ENCODE measurements at regions of chr11 and their contacts with region 1.

Region 1: GRCh38 chr11:35237860-35238715 is 99.1 kb downstream of the CD44 start:
- DNase-seq: no peak
- ATAC-seq: peak; percentile 23

Region 2: DNA sequence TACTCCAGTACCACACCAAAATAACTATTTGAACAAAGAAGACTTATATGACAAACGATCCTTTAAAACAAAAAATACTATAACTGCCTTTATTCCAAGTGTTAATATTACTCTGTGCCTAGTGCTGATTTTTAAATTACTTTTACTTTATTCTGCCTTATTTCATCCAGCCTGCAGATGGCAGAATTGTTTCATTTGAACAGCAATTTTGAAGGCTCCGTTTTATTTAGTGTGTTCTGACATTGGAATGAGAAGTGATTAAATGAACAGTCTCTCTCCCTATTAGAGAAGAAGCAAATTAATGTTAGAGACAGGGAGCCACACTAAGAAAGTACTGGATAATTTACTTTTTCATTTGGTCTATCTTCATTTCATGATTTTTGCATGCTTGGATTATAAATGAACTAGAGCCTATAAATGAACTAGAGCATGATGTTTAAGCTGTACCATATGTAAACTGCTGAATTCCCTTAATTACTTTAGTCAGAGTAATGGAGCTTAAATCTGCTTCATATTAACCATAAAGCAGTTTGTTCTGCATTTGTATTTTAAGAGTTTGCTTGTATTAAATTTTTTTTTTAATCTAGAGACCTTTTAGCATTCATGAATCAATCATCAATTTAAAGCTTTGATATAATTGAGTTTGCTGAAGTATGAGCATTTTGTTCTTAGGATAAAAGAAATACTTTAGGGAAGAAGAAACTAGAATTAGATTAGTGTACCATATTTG is 311.8 kb before region 1 on chr11:
- intact Hi-C with region 1: loop called (anchors 2 kb)
- DNase-seq: no peak
- ATAC-seq: peak; percentile 52

Region 3: DNA sequence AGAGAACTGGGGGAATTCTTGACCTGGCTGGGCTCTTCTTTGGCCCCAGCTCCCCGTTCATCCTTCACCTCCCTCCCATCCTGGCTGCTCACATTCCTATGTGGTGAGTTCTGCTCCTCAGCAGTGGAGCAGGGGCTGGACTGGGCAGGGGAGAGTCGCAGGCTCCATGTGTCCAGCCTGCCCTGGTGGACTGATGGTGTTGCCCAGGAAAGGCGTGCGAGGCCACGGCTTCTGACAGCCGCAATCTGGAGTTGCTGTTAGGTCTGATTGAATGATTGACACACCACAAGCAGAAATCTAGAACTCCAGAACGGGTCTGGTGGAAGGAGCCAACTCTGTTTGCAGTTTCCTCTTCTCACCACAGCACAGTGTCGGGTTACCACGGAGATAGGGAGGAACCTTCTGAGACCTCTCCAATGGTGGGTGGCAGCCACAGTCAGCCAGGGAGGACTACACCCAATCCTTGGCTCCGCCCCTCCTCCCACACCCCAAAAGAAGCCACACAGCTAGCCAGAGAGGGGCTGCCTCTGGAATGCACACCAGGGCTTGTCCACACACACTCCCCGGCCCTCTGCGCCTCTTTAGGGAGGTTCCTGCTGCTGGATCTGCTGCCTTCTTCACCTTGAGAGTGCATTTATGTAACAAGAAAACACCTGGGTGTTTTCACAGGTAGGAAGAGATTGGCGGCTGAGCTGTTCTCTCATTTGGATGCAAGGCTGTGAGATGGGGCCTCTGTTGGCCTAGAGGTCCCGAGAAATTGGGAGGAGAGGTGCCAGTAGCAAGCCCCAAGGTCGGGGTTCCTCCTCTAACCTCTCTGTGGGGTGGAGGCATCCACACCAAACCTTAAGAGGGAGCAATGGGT is 155.5 kb before region 1 on chr11:
- intact Hi-C with region 1: loop called (anchors 10 kb)
- DNase-seq: peak; percentile 87
- ATAC-seq: peak; percentile 63

Region 4: DNA sequence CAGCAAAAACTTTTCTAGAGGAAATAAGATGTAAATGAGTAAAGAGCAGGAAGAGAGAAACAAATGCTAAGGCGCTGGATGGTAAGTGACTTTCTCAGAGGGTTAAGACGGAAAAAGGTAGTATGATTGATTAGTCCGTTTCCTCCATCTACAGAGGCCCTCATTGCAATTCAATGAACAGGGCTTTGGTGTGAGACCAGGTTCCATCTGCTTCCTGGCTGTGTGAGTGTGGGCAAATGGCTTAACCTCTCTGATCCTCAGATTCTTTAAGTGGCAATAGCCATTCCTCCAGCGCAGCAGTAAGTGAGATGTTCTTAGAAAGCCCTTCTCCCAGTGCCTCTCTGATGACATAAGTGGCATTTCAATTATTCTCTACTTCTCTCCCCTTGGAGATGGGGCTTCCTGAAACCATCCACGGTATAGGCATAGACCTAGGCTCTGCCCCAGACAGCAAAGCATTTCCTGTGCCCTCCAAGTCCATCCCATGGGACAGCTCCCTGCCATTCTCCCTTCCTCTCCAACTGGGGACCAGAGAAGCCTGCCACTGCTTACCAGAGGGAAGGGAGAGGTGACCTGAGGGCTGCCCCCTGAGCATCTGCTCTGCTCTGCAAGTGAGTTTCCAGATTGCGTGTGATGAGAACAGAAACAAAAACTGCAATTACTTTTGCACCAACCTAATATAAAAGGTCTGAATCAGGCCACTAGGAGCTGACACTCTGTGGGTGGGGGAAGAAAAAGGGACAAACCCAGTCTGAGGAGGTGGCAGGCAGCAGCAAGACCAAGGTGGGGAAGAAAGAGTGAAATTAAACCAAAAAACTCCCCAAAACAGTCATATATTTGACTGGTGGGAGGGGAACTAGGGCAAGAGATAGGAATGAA is 111.8 kb before region 1 on chr11:
- intact Hi-C with region 1: no loop called
- DNase-seq: no peak
- ATAC-seq: no peak

Region 5: DNA sequence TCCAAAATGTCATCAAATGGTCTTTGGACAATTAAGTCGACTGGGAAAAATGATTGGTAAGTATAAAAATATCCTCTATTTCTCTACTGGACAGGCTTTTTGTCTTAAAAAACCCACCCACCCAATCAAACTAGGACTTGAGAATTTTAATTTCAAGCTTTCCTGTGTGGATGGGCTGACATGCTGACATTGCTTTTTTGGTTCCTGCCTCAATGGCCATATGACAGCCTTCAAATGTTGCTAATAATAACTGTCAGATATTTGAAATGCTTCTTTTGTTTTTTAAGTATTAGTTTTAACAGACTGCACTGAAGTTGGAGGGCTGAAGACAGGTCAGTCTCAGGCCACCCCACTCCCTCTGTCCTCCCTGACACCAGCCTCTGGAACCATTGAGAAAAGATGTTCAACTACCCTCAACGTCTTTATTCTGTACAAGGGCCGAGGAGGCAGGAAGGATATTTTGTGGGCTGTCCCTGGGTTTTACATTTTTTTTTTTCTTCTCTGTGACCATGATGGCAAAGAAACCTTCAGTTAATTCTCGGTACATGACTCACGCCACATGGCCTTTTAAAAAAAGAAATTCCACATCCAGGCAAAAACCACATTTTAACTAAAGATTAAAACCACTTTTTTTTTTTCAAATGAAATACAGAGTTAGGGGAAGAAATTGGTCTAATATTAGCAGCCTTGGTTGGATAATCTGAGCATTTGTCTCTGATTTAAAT is 50.9 kb after region 1 on chr11:
- intact Hi-C with region 1: no loop called
- DNase-seq: no peak
- ATAC-seq: no peak

Measured in Right ventricle myocardium inferior (tissue), 1 donor.